Heart right ventricle (tissue), 16 donors: ENCODE measurements at regions of chr6 and their contacts with region 1.

Region 1: GRCh38 chr6:80004173-80005072 is at the start of gene TTK:
- DNase-seq: peak; percentile 90 to 92
- ATAC-seq: peak; percentile 100
- H3K4me3 ChIP-seq: peak within 1 kb of the TSS; percentile 48 to 82 (median 68)
- H3K27ac ChIP-seq: peak within 1 kb of the TSS in 9 of 10 donors; percentile 62 to 92 (median 86)
- H3K4me1 ChIP-seq: peaks cover 0 to 16% (median 12%) of the 10 kb centered on the region in 9 donors
- H3K27me3 ChIP-seq: no peaks in the 10 kb centered on the region
- CTCF ChIP-seq: no peak
- total RNA-seq, gene TTK: 0.19 to 3.4 (median 0.41) TPM in 8 of 10 donors, not detected in the others

Region 2: GRCh38 chr6:79971195-79971594 is 33.2 kb before region 1 on chr6:
- intact Hi-C with region 1: no loop called
- DNase-seq: no peak
- ATAC-seq: no peak
- H3K4me3 ChIP-seq: no peak overlapping the region
- H3K27ac ChIP-seq: no peak overlapping the region
- H3K4me1 ChIP-seq: no peaks in the 10 kb centered on the region
- H3K27me3 ChIP-seq: no peaks in the 10 kb centered on the region
- CTCF ChIP-seq: no peak

Region 3: GRCh38 chr6:80106418-80107235 is 102.2 kb after region 1 on chr6 and contains the start of gene BCKDHB:
- intact Hi-C with region 1: loop called in 5 of 10 experiments (anchors 5 to 10 kb)
- DNase-seq: peak; percentile 97 to 99
- ATAC-seq: peak; percentile 99 to 100 (median 100)
- H3K4me3 ChIP-seq: peak within 1 kb of the TSS; percentile 69 to 99 (median 85)
- H3K27ac ChIP-seq: peak within 1 kb of the TSS; percentile 23 to 93 (median 87)
- H3K4me1 ChIP-seq: peaks cover 0 to 17% (median 9%) of the 10 kb centered on the region in 9 donors
- H3K27me3 ChIP-seq: peaks cover 0 to 5% (median 0%) of the 10 kb centered on the region in 7 donors
- CTCF ChIP-seq: peak in 3 of 9 donors; percentile 7 to 32 (median 19)
- total RNA-seq, gene BCKDHB: 24.9 to 46.4 (median 33.0) TPM